Common myeloid progenitor, CD34-positive (primary cell): ENCODE measurements at regions of chr6 and their contacts with region 1.

Region 1: GRCh38 chr6:30742316-30743098 is at the start of gene FLOT1:
- DNase-seq: peak; percentile 76 to 84 (median 84)
- H3K4me3 ChIP-seq: peak within 1 kb of the TSS; percentile 72 to 95 (median 82)
- H3K27ac ChIP-seq: peak within 1 kb of the TSS in 1 of 2 experiments; percentile 78
- H3K4me1 ChIP-seq: peaks cover 8 to 46% (median 45%) of the 10 kb centered on the region in 4 experiments
- H3K27me3 ChIP-seq: peaks cover 0 to 14% (median 1%) of the 10 kb centered on the region in 5 experiments

Region 2: GRCh38 chr6:30625457-30625856 is 117.0 kb before region 1 on chr6:
- CTCF ChIA-PET with region 1: no interaction called
- POLR2A ChIA-PET with region 1: no interaction called
- DNase-seq: no peak
- H3K4me3 ChIP-seq: no peak overlapping the region
- H3K27ac ChIP-seq: peak overlapping the region in 1 of 2 experiments; percentile 86
- H3K4me1 ChIP-seq: peaks cover 4 to 15% (median 14%) of the 10 kb centered on the region in 4 experiments
- H3K27me3 ChIP-seq: no peaks in the 10 kb centered on the region

Region 3: DNA sequence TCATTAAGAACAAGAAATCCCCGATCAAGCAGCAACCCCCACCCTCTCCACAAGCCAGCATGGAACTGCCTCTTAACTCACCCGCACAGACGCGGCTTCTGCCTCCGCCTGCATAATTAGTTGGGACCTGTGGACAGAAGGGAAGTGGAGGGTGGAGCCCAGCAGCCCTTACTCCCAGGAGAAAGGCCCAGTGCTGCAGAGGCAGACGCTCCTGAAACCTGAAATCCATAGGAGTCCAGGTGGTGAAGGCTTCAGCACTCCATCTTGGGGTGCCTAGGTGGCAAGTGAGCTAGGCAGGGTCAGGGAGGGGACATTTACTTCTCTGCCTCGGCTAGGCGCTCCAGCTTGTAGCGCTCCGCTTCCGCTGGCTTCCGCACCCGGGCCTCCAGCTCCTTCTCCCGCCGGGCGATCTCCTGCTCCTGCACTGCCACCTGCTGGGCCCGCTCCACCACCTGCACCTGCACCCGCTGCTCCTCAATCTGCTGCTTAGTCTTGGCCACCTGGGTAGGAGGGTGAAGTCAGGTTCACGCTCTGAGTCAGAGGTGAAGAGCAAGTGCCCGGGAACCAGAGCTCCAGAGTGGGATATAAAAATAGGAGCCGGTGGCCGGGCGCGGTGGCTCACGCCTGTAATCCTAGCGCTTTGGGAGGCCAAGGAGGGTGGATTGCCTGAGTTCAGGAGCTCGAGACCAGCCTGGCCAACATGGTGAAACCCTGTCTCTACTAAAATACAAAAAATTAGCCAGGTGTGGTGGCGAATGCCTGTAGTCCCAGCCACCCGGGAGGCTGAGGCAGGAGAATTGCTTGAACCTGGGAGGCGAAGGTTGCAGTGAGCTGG is 11.7 kb before region 1 on chr6:
- CTCF ChIA-PET with region 1: interaction called, 13 read pairs
- POLR2A ChIA-PET with region 1: interaction called, 3 read pairs
- DNase-seq: peak; percentile 79 to 86 (median 85)
- H3K4me3 ChIP-seq: peak overlapping the region in 3 of 7 experiments; percentile 31 to 42 (median 41)
- H3K27ac ChIP-seq: no peak overlapping the region
- H3K4me1 ChIP-seq: peaks cover 0 to 26% (median 14%) of the 10 kb centered on the region in 4 experiments
- H3K27me3 ChIP-seq: no peaks in the 10 kb centered on the region

Region 4: DNA sequence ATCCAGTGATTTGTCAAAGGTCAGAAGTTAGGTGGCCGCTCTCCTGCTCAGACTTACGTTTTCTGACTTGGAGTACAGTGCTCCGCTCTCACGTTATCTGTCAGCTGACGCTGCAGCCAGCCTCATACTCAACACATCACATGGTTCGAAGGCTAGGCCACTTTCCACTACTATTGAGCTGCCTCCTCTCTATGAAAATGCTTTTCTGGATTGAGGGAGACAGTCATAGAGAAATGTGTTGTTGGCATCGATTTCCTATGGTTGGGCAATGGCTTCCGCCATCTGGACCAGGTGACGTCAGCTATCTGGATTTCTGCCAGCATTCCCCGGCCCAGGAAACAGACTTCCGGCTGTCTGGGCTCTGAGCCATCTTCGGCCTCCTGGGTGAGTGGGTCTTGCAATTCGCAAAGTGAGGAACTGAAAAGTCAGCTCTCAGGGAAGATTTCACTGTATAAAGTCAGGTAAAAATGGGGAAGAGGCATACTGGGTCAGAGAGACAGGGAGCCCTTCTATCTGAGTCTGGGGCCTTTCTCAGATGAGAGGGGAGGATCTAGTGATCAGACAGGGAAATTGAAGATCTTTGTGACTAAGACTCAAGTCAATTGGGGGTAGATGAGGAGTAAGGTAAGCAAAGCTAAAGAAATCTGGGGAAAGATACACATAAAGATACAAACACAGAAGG is 39.4 kb after region 1 on chr6:
- CTCF ChIA-PET with region 1: interaction called, 5 read pairs
- POLR2A ChIA-PET with region 1: interaction called, 11 read pairs
- DNase-seq: peak; percentile 90 to 97 (median 90)
- H3K4me3 ChIP-seq: peak overlapping the region in 2 of 7 experiments; percentile 22 to 30
- H3K27ac ChIP-seq: peak overlapping the region in 1 of 2 experiments; percentile 78
- H3K4me1 ChIP-seq: peaks cover 6 to 55% (median 30%) of the 10 kb centered on the region in 4 experiments
- H3K27me3 ChIP-seq: peaks cover 0 to 63% (median 8%) of the 10 kb centered on the region in 5 experiments